ENCODE measurements at regions of chr7 and their contacts with region 1.

Region 1: DNA sequence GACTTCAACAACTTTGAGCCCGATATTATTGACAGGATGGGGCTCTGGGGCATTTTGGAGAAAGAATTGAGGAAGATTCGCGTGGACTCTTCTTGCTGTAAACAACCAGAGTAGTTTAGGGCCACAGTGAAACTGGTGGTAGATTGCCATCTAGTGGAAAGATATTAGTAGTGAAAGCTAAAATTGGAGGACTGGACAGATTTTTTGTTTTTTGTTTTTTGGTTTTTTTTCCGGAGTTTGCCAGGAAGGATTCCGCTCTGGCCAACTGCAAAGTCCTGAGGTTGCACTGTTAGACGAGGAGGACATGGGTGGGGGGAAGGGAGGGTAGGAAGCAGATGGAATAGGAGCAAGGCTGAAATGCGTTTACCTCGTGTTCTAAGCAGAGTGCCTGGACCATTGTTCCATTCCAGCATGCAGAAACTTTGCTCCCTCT is 11.7 kb downstream of the NOBOX start:
- DNase-seq: peak; percentile 43
- ATAC-seq: peak; percentile 90
- H3K4me3 ChIP-seq: no peak overlapping the region
- H3K27ac ChIP-seq: no peak overlapping the region
- H3K4me1 ChIP-seq: peaks cover 6% of the 10 kb centered on the region
- H3K27me3 ChIP-seq: peaks cover 7% of the 10 kb centered on the region
- CTCF ChIP-seq: peak; percentile 80

Region 2: DNA sequence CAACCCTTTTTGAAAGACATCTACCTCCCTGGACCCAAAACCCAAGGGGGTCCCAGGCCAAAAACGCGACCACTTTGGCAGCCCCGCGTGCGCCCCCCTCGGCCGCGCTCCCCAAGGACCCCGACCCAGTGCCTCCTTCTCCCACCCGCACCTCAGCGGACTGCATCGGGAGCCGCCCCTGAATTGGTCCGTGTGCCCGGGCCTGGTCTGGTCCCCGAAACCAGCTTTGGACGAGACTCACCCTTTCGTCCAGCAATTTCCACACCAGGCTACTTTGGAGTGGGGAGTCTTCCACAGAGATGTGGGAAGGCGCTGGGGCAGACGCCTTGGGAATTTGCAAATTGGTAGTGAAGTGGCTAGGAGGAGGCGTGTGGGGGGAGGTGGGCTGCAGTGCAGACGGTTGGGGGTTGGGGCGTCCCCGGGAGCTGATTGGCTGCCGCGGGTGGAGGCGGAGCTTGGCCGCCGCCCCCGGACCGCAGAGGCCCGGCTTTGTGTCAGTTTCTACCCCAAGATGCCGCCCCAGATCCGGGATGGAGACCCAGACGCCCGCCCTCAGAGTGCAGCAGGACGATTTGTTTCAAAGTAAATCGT is 506.8 kb before region 1 on chr7:
- CTCF ChIA-PET with region 1: interaction called, 12 read pairs
- POLR2A ChIA-PET with region 1: no interaction called
- in situ Hi-C with region 1: no loop called
- intact Hi-C with region 1: no loop called
- DNase-seq: no peak
- ATAC-seq: no peak
- H3K4me3 ChIP-seq: peak overlapping the region in 1 of 2 experiments; percentile 35; a peak in 1 of 4 replicates
- H3K27ac ChIP-seq: no peak overlapping the region
- H3K4me1 ChIP-seq: no peaks in the 10 kb centered on the region
- H3K27me3 ChIP-seq: no peaks in the 10 kb centered on the region
- CTCF ChIP-seq: no peak

Region 3: GRCh38 chr7:144174613-144175012 is 217.2 kb before region 1 on chr7:
- CTCF ChIA-PET with region 1: no interaction called
- POLR2A ChIA-PET with region 1: no interaction called
- in situ Hi-C with region 1: no loop called
- intact Hi-C with region 1: loop called (anchors 5 kb)
- DNase-seq: no peak
- ATAC-seq: no peak
- H3K4me3 ChIP-seq: no peak overlapping the region
- H3K27ac ChIP-seq: no peak overlapping the region
- H3K4me1 ChIP-seq: no peaks in the 10 kb centered on the region
- H3K27me3 ChIP-seq: no peaks in the 10 kb centered on the region
- CTCF ChIP-seq: no peak

Region 4: GRCh38 chr7:144437370-144438191 is 45.7 kb after region 1 on chr7:
- CTCF ChIA-PET with region 1: no interaction called
- POLR2A ChIA-PET with region 1: no interaction called
- in situ Hi-C with region 1: no loop called
- intact Hi-C with region 1: loop called (anchors 5 kb)
- DNase-seq: peak; percentile 69
- ATAC-seq: peak; percentile 92
- H3K4me3 ChIP-seq: no peak overlapping the region
- H3K27ac ChIP-seq: no peak overlapping the region
- H3K4me1 ChIP-seq: no peaks in the 10 kb centered on the region
- H3K27me3 ChIP-seq: no peaks in the 10 kb centered on the region; the same call in 1 of the 2 replicates
- CTCF ChIP-seq: peak; percentile 72

Measured in Panc1 (cell line).